Sciatic nerve (tissue), 2 donors: ENCODE measurements at regions of chr5 and their contacts with region 1.

Region 1: DNA sequence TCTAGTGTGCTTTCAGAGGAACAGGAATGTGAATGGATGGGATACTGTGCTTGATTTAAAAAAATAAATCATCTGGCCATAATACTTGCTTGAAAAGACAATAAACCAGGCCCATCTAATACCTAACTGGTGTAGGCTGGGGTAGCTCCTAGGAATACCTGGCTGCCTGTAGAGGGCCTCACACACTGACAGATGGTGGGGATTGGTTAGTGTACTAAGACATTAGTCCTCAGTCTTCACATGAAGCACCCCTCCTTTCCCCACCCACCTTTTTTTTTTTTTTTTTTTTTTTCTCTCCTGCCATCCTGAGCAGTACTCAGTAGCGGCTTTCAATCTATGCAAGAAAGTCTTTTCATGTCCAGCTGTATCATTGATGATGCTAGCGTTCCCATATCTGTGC is 130.5 kb downstream of the ADGRV1 start:
- DNase-seq: no peak
- ATAC-seq: no peak

Region 2: GRCh38 chr5:90658620-90659019 is 30.4 kb before region 1 on chr5:
- intact Hi-C with region 1: loop called (anchors 2 kb)
- DNase-seq: no peak
- ATAC-seq: no peak